ENCODE measurements at regions of chr1 and their contacts with region 1.

Region 1: GRCh38 chr1:80225510-80225909 is 1219.0 kb upstream of the ADGRL4 start:
- DNase-seq: no peak
- ATAC-seq: no peak
- H3K4me3 ChIP-seq: no peak overlapping the region
- H3K4me3 Mint-ChIP-seq: no peak overlapping the region
- H3K27ac ChIP-seq: no peak overlapping the region
- H3K27ac Mint-ChIP-seq: no peak overlapping the region
- H3K4me1 ChIP-seq: no peaks in the 10 kb centered on the region
- H3K4me1 Mint-ChIP-seq: no peaks in the 10 kb centered on the region
- H3K27me3 ChIP-seq: no peaks in the 10 kb centered on the region
- H3K27me3 Mint-ChIP-seq: no peaks in the 10 kb centered on the region
- CTCF ChIP-seq: no peak

Region 2: GRCh38 chr1:79969886-79970285 is 255.6 kb before region 1 on chr1:
- CTCF ChIA-PET with region 1: no interaction called
- POLR2A ChIA-PET with region 1: no interaction called
- intact Hi-C with region 1: loop called in 1 of 2 experiments (anchors 5 kb)
- DNase-seq: no peak
- ATAC-seq: no peak
- H3K4me3 ChIP-seq: no peak overlapping the region
- H3K4me3 Mint-ChIP-seq: no peak overlapping the region
- H3K27ac ChIP-seq: no peak overlapping the region
- H3K27ac Mint-ChIP-seq: no peak overlapping the region
- H3K4me1 ChIP-seq: no peaks in the 10 kb centered on the region
- H3K4me1 Mint-ChIP-seq: no peaks in the 10 kb centered on the region
- H3K27me3 ChIP-seq: no peaks in the 10 kb centered on the region
- H3K27me3 Mint-ChIP-seq: no peaks in the 10 kb centered on the region
- CTCF ChIP-seq: no peak

Region 3: DNA sequence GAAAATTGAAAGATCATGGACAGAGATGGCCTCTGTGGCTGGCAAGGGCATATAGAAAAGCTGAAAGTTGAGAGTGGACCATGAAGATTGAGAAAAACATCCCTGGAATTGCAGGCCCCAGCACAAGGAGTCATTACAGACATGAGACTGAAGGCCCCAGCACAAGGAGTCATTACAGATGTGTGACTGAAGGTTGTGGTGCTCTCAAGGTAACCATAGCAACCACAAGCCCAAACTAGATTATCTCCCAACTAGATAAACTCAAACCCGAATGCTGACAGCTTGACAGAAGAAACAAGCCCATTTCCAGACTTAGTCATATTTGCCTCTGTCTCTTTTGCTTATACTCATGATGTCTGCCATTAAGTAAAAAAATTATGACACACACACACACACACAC is 33.1 kb after region 1 on chr1:
- CTCF ChIA-PET with region 1: no interaction called
- POLR2A ChIA-PET with region 1: no interaction called
- intact Hi-C with region 1: no loop called
- DNase-seq: no peak
- ATAC-seq: no peak
- H3K4me3 ChIP-seq: no peak overlapping the region
- H3K4me3 Mint-ChIP-seq: no peak overlapping the region
- H3K27ac ChIP-seq: no peak overlapping the region
- H3K27ac Mint-ChIP-seq: no peak overlapping the region
- H3K4me1 ChIP-seq: no peaks in the 10 kb centered on the region
- H3K4me1 Mint-ChIP-seq: no peaks in the 10 kb centered on the region
- H3K27me3 ChIP-seq: no peaks in the 10 kb centered on the region
- H3K27me3 Mint-ChIP-seq: no peaks in the 10 kb centered on the region
- CTCF ChIP-seq: no peak